Activated B cell treated with CpG ODN at 0.5 μM for 24 hours (primary cell): ENCODE measurements at regions of chr9 and their contacts with region 1.

Region 1: GRCh38 chr9:113578882-113579282 is 115.4 kb downstream of the RGS3 start:
- DNase-seq: peak; percentile 68
- ATAC-seq: peak; percentile 48
- H3K4me3 Mint-ChIP-seq: peak overlapping the region; percentile 53
- H3K27ac Mint-ChIP-seq: peak overlapping the region; percentile 94
- H3K4me1 Mint-ChIP-seq: peaks cover 79% of the 10 kb centered on the region
- H3K27me3 Mint-ChIP-seq: no peaks in the 10 kb centered on the region
- CTCF ChIP-seq: no peak

Region 2: DNA sequence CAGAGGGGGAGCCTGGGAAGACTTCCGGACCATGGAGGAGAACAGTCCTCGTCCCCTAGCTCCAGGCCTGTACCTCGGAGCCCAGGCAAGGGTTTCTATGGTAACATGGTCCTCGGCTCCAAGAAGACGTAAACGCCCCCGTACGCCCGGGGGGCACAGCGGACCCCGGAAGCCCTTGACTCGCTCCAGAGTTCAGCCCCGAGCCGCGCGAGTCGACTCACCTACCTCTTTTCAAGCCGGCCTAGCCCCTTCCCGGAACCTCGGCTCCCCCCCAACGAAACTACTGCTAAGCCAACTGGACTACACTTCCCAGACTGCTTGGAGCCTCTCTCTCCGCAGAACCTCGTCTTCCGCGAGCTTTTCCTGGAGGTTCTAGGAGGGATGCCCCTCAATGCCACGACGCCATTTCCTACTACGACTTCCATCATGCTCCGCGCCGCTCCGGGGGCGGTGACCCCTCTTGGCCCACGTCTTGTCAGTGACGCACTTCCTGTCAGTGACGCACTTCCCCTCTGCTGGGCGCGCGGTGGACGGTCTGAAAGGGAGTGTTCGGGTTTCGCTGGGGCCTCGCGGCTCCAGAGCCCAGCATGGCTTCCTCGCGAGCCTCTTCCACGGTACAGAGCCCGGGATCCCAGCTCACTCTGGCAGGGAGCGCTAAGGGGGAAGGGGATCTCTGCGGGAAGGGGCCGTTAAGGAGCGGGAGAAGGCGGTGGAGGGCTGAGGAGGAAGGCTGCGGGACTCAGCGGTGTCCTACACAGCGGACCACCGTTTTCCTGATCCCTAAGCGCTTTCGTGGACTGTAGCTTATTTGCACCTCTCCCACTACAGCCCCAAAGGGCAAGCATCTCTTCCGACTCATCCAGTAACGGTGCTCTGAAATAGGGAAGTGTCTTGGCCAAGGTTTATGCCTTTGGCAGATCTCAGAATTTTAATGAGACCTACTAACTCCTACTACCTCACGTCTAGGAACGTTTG is 303.4 kb before region 1 on chr9 and contains the starts of genes CDC26 and PRPF4:
- CTCF ChIA-PET with region 1: interaction called, 28 read pairs
- POLR2A ChIA-PET with region 1: interaction called, 10 read pairs
- intact Hi-C with region 1: loop called (anchors 1 kb)
- DNase-seq: peak; percentile 92
- ATAC-seq: peak; percentile 88
- H3K4me3 Mint-ChIP-seq: no peak within 1 kb of the TSS
- H3K27ac Mint-ChIP-seq: no peak within 1 kb of the TSS
- H3K4me1 Mint-ChIP-seq: peaks cover 9% of the 10 kb centered on the region
- H3K27me3 Mint-ChIP-seq: no peaks in the 10 kb centered on the region
- CTCF ChIP-seq: no peak
- total RNA-seq, gene CDC26: 30.4 and 31.7 TPM in 2 replicates
- total RNA-seq, gene PRPF4: 32.8 and 36.7 TPM in 2 replicates

Region 3: DNA sequence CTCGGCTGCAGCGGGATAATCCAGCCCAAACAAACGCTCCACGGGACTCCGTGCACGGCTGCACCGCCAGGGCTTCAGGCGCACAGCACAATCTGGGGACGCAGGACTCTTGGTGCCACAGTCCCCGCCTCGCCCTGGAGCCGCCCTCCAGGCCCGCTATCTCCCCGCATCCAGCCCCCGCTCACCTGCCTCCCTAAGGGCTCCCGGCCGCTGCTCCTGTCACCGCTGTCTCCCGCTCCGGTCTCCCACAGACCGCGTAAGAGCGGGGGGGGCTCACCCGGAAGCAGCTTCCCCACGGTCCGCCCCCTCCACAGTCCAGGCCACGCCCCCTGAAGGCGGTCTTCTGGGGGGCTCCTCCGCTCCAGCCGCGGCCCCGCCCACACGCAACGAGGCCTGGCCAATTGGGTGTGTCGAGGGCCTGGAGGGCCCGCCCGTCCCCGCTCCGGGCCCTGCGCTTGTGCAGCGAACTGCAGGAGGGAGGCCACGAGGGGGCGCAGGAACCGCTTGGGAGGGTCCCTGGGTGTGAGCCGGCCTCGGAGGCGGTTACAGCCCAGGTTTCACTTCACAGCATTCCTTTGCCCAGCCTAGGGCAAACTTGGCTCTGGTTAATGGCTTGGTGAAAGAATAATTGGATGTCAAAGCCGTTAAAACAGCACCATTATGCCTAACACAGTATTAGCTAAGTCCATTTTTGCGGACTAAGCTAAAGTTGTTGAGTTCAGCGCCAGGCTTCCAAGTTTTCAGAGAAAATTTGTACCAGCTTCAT is 177.7 kb before region 1 on chr9 and contains the start of gene ALAD:
- CTCF ChIA-PET with region 1: interaction called, 32 read pairs
- POLR2A ChIA-PET with region 1: interaction called, 19 read pairs
- intact Hi-C with region 1: loop called (anchors 1 kb)
- DNase-seq: peak; percentile 99
- ATAC-seq: peak; percentile 99
- H3K4me3 Mint-ChIP-seq: peak within 1 kb of the TSS; percentile 96
- H3K27ac Mint-ChIP-seq: peak within 1 kb of the TSS; percentile 87
- H3K4me1 Mint-ChIP-seq: peaks cover 17% of the 10 kb centered on the region
- H3K27me3 Mint-ChIP-seq: no peaks in the 10 kb centered on the region
- CTCF ChIP-seq: no peak
- total RNA-seq, gene ALAD: 24.0 and 24.3 TPM in 2 replicates

Region 4: DNA sequence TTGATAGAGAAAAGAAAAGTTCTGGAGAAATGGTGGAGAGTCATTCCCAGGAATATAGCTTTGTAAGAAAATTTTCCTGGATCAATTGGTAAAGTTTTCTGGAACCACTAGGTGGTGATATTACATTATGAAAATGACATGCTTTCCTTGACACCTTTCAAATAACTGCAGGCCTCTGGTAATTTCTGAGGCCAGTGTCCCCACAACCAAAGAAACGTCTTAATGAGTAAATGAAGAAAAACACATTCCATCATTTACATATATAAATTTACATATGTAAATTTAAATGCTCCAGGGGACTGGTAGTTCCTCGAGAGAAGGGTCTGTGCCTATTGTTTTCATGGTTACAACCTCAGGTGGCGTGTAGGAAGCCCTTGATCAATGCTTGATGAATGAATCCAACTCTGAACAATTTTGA is 132.6 kb before region 1 on chr9:
- CTCF ChIA-PET with region 1: interaction called, 58 read pairs
- POLR2A ChIA-PET with region 1: interaction called, 13 read pairs
- intact Hi-C with region 1: loop called (anchors 2 kb)
- DNase-seq: no peak
- ATAC-seq: peak; percentile 31
- H3K4me3 Mint-ChIP-seq: no peak overlapping the region
- H3K27ac Mint-ChIP-seq: no peak overlapping the region
- H3K4me1 Mint-ChIP-seq: no peaks in the 10 kb centered on the region
- H3K27me3 Mint-ChIP-seq: no peaks in the 10 kb centered on the region
- CTCF ChIP-seq: no peak

Region 5: GRCh38 chr9:113564498-113565237 is 14.2 kb before region 1 on chr9:
- CTCF ChIA-PET with region 1: interaction called, 8 read pairs
- POLR2A ChIA-PET with region 1: interaction called, 7 read pairs
- intact Hi-C with region 1: loop called (anchors 2 kb)
- DNase-seq: no peak
- ATAC-seq: no peak
- H3K4me3 Mint-ChIP-seq: peak overlapping the region; percentile 38
- H3K27ac Mint-ChIP-seq: no peak overlapping the region
- H3K4me1 Mint-ChIP-seq: peaks cover 10% of the 10 kb centered on the region
- H3K27me3 Mint-ChIP-seq: peaks cover 10% of the 10 kb centered on the region
- CTCF ChIP-seq: no peak

Region 6: GRCh38 chr9:113657703-113658544 is 79.0 kb after region 1 on chr9:
- CTCF ChIA-PET with region 1: interaction called, 53 read pairs
- POLR2A ChIA-PET with region 1: no interaction called
- intact Hi-C with region 1: loop called (anchors 2 kb)
- DNase-seq: peak; percentile 74
- ATAC-seq: peak; percentile 97
- H3K4me3 Mint-ChIP-seq: no peak overlapping the region
- H3K27ac Mint-ChIP-seq: no peak overlapping the region
- H3K4me1 Mint-ChIP-seq: no peaks in the 10 kb centered on the region
- H3K27me3 Mint-ChIP-seq: peaks cover 16% of the 10 kb centered on the region
- CTCF ChIP-seq: peak; percentile 84